Activated CD8-positive, alpha-beta T cell treated with anti-CD3 and anti-CD28 coated beads, Interleukin-2, amount 10 ng/mL, durations not matched to agents 7 days and 5 days (primary cell): ENCODE measurements at regions of chr11 and their contacts with region 1.

Region 1: GRCh38 chr11:64246871-64247728 is at the start of gene PPP1R14B:
- DNase-seq: peak; percentile 85
- ATAC-seq: peak; percentile 61
- H3K4me3 Mint-ChIP-seq: peak within 1 kb of the TSS; percentile 88
- H3K27ac Mint-ChIP-seq: peak within 1 kb of the TSS; percentile 85
- H3K4me1 Mint-ChIP-seq: peaks cover 53% of the 10 kb centered on the region
- H3K27me3 Mint-ChIP-seq: no peaks in the 10 kb centered on the region
- total RNA-seq, gene PPP1R14B: 178 to 197 TPM

Region 2: GRCh38 chr11:64225612-64226506 is 21.2 kb before region 1 on chr11 and contains the starts of genes NUDT22 and TRPT1:
- CTCF ChIA-PET with region 1: interaction called, 10 read pairs
- POLR2A ChIA-PET with region 1: interaction called, 58 read pairs
- DNase-seq: peak; percentile 95
- ATAC-seq: peak; percentile 68
- H3K4me3 Mint-ChIP-seq: peak within 1 kb of the TSS; percentile 88
- H3K27ac Mint-ChIP-seq: peak within 1 kb of the TSS; percentile 91
- H3K4me1 Mint-ChIP-seq: peaks cover 42% of the 10 kb centered on the region
- H3K27me3 Mint-ChIP-seq: no peaks in the 10 kb centered on the region
- total RNA-seq, gene NUDT22: 86.7 to 91.6 TPM
- total RNA-seq, gene TRPT1: 37.8 to 44.8 TPM

Region 3: GRCh38 chr11:64263021-64263946 is 16.2 kb after region 1 on chr11:
- CTCF ChIA-PET with region 1: interaction called, 63 read pairs
- POLR2A ChIA-PET with region 1: interaction called, 23 read pairs
- DNase-seq: no peak
- ATAC-seq: no peak
- H3K4me3 Mint-ChIP-seq: no peak overlapping the region
- H3K27ac Mint-ChIP-seq: no peak overlapping the region
- H3K4me1 Mint-ChIP-seq: peaks cover 17% of the 10 kb centered on the region
- H3K27me3 Mint-ChIP-seq: no peaks in the 10 kb centered on the region

Region 4: DNA sequence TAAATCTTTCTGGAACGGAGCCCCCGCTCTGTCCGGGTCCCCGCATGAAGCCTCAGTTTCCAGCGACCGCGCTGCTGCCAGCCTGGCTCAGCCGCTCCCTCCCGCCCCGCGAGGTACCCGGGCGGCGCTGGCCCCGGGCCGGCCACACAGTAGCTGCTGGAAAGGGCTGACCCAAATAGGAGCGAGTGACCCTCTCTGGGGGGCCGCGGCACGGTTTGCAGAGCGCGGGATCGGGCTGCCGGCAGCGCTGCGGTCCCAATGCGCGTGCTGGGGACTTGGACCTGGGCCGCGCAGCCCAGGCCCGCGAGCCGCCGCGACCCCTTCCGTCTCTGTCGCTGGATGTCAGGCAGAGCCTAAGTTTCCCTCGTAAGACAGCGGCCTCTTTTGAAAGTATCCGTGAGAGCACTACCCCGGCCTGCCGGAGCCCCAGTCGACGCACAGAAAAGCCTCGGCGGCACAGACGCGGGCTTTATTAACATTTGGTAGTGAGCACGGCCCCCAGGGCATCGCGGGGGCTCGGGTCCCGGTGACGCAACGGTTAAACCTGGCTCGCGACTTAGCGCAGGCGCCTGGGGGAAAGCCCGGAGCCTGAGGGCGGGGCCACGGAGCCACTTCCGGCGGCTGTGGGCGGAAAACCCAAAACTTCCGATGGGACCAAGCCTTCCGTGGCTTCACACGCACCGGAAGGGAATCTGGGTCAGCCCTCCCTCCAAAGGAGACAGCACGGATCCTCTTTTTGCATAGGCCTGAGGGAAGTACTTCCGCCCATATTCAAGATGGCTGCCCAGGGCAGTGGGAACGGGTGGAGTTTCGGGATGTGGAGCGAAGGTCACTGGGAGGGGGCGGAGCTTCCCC is 22.5 kb after region 1 on chr11:
- CTCF ChIA-PET with region 1: interaction called, 63 read pairs
- POLR2A ChIA-PET with region 1: interaction called, 23 read pairs
- DNase-seq: peak; percentile 97
- ATAC-seq: peak; percentile 74
- H3K4me3 Mint-ChIP-seq: peak overlapping the region; percentile 93
- H3K27ac Mint-ChIP-seq: peak overlapping the region; percentile 97
- H3K4me1 Mint-ChIP-seq: peaks cover 34% of the 10 kb centered on the region
- H3K27me3 Mint-ChIP-seq: no peaks in the 10 kb centered on the region